RWPE1 (cell line): ENCODE measurements at regions of chr7 and their contacts with region 1.

Region 1: GRCh38 chr7:98106647-98107445 is at the start of gene LMTK2:
- DNase-seq: peak; percentile 98
- H3K27ac ChIP-seq: peak within 1 kb of the TSS; percentile 65
- CTCF ChIP-seq: peak; percentile 99

Region 2: GRCh38 chr7:98119256-98119918 is 12.5 kb after region 1 on chr7:
- CTCF ChIA-PET with region 1: interaction called, 11 read pairs
- POLR2A ChIA-PET with region 1: interaction called, 3 read pairs
- DNase-seq: peak; percentile 86
- H3K27ac ChIP-seq: peak overlapping the region; percentile 68
- CTCF ChIP-seq: no peak